ENCODE measurements at regions of chr17 and their contacts with region 1.

Region 1: DNA sequence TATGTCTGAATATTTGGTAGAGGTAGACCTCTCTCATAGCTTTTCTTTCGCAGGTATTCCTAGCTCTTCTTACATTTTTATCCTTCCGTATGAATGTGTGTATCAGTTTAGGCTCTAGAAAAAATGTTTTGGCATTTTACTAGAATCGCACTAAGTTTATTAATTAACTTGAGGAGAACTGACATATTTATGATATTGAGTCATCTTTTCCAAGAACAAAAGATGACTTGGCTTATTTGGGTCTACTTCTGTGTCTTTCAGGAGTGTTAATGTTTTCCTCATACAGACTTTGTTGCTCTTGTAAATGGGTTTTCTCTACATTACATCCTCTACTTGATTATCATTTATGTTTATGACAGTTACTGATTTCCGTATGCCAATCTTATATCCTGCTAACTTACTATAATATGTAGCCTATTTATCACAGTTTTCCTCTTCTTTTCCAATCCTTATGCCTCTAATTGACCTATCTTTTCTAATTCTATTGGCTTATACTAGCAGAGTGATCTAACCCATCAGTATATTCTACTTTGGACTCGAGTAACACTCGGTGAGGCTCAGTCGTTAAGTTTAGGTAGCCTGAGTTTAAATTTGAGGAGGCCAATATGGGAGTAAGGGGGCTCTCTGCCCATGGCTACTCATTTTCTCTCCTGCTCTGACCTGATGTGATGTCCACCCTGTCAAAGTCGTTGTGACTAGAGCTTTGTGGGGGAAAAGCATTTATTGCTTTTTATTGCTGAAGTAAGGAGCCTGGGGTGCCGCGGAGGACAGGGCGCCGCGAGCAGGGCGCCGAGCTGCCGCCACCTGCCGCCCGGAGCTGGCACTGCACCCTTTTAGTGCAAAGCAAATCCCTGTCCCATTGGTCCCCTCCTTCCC is 20.0 kb downstream of the ST6GALNAC1 start:
- DNase-seq: no peak
- ATAC-seq: peak; percentile 99
- H3K4me3 ChIP-seq: no peak overlapping the region
- H3K27ac ChIP-seq: no peak overlapping the region
- H3K4me1 ChIP-seq: no peaks in the 10 kb centered on the region
- H3K27me3 ChIP-seq: peaks cover 2 to 3% of the 10 kb centered on the region in 2 experiments; a peak in 3 of 4 replicates
- CTCF ChIP-seq: peak; percentile 90 to 97 (median 93); a peak in 5 of 6 replicates
- EP300 ChIP-seq: no peak
- POLR2A ChIP-seq: no peak
- RAD21 ChIP-seq: peak; percentile 81

Region 2: GRCh38 chr17:76523084-76524037 is 100.1 kb before region 1 on chr17:
- CTCF ChIA-PET with region 1: interaction called, 81 read pairs
- POLR2A ChIA-PET with region 1: no interaction called
- RAD21 ChIA-PET with region 1: interaction called, 23 read pairs
- SMC1A ChIA-PET with region 1: interaction called, 10 read pairs
- in situ Hi-C with region 1: loop called (anchors 5 kb)
- intact Hi-C with region 1: loop called (anchors 1 kb)
- DNase-seq: no peak
- ATAC-seq: peak; percentile 75
- H3K4me3 ChIP-seq: no peak overlapping the region
- H3K27ac ChIP-seq: no peak overlapping the region
- H3K4me1 ChIP-seq: peaks cover 10% of the 10 kb centered on the region
- H3K27me3 ChIP-seq: no peaks in the 10 kb centered on the region
- CTCF ChIP-seq: peak; percentile 99 to 100 (median 99); a peak in 5 of 6 replicates
- EP300 ChIP-seq: no peak
- POLR2A ChIP-seq: no peak
- RAD21 ChIP-seq: peak; percentile 89

Region 3: GRCh38 chr17:76557368-76558197 is 65.9 kb before region 1 on chr17:
- CTCF ChIA-PET with region 1: interaction called, 146 read pairs
- POLR2A ChIA-PET with region 1: interaction called, 5 read pairs
- RAD21 ChIA-PET with region 1: interaction called, 33 read pairs
- SMC1A ChIA-PET with region 1: interaction called, 87 read pairs
- in situ Hi-C with region 1: no loop called
- intact Hi-C with region 1: loop called (anchors 2 kb)
- DNase-seq: peak; percentile 82
- ATAC-seq: peak; percentile 85
- H3K4me3 ChIP-seq: peak overlapping the region; percentile 74
- H3K27ac ChIP-seq: peak overlapping the region; percentile 95
- H3K4me1 ChIP-seq: peaks cover 14% of the 10 kb centered on the region
- H3K27me3 ChIP-seq: no peaks in the 10 kb centered on the region
- CTCF ChIP-seq: peak; percentile 24 to 65 (median 64); a peak in 5 of 6 replicates
- EP300 ChIP-seq: no peak
- POLR2A ChIP-seq: peak; percentile 98
- RAD21 ChIP-seq: no peak

Region 4: GRCh38 chr17:76567634-76568432 is 55.7 kb before region 1 on chr17:
- CTCF ChIA-PET with region 1: interaction called, 14 read pairs
- POLR2A ChIA-PET with region 1: no interaction called
- RAD21 ChIA-PET with region 1: interaction called, 5 read pairs
- SMC1A ChIA-PET with region 1: interaction called, 87 read pairs
- in situ Hi-C with region 1: no loop called
- intact Hi-C with region 1: no loop called
- DNase-seq: no peak
- ATAC-seq: peak; percentile 63
- H3K4me3 ChIP-seq: no peak overlapping the region
- H3K27ac ChIP-seq: no peak overlapping the region
- H3K4me1 ChIP-seq: peaks cover 7% of the 10 kb centered on the region
- H3K27me3 ChIP-seq: no peaks in the 10 kb centered on the region
- CTCF ChIP-seq: no peak
- EP300 ChIP-seq: peak in 1 of 2 experiments; percentile 22; a peak in 1 of 4 replicates
- POLR2A ChIP-seq: peak; percentile 23; the same call in 1 of the 2 replicates
- RAD21 ChIP-seq: no peak

Region 5: GRCh38 chr17:76585091-76585817 is 38.3 kb before region 1 on chr17:
- CTCF ChIA-PET with region 1: interaction called, 13 read pairs
- POLR2A ChIA-PET with region 1: interaction called, 6 read pairs
- RAD21 ChIA-PET with region 1: interaction called, 7 read pairs
- SMC1A ChIA-PET with region 1: interaction called, 3 read pairs
- in situ Hi-C with region 1: no loop called
- intact Hi-C with region 1: no loop called
- DNase-seq: no peak
- ATAC-seq: peak; percentile 13
- H3K4me3 ChIP-seq: peak overlapping the region; percentile 63; the same call in 1 of the 2 replicates
- H3K27ac ChIP-seq: no peak overlapping the region
- H3K4me1 ChIP-seq: peaks cover 11% of the 10 kb centered on the region
- H3K27me3 ChIP-seq: peaks cover 3 to 9% of the 10 kb centered on the region in 2 experiments; a peak in 3 of 4 replicates
- CTCF ChIP-seq: no peak
- EP300 ChIP-seq: no peak
- POLR2A ChIP-seq: no peak
- RAD21 ChIP-seq: no peak

Region 6: DNA sequence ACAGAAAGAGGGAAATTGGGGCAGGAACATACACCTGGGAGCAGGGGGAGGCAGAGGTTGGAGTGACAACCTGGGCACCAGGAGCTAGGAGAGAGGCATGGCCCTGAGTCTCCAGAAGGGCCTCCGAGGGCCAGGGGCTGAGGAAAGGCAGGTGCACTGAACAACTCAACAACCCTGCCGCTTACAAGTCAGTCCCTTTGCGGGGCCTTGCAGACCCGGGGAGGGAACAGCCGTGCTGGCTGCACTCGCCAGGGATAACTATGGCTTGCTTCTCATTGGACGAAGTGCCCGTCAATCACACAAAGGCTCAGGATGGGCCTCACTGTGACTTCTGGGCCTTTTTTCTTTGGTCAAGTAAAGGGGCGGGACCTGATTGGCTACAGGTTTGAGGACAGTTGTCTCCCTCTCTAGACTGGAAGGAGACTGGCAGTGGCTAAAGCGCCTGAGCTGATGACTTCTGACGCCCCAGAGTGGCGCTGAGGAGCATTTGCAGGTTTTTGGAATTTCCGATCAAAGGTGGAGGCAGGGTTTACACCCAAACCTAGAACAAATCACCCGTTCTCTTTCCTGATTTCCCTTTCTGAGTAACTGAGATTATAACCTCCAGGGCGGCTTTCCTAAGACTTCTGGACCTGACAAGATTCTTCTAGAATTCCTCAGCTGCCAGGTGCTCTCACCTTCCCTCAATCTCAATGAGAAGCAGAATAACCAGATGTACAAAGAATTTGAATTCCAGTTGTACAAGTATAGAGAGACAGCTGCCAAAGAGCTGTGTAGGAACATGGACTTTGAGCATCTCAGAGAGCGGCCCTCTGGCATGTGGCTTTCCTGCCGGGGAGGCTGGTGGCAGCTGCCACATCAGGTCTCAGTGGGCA is 10.3 kb before region 1 on chr17:
- CTCF ChIA-PET with region 1: interaction called, 14 read pairs
- POLR2A ChIA-PET with region 1: no interaction called
- RAD21 ChIA-PET with region 1: interaction called, 5 read pairs
- SMC1A ChIA-PET with region 1: interaction called, 6 read pairs
- in situ Hi-C with region 1: no loop called
- intact Hi-C with region 1: no loop called
- DNase-seq: no peak
- ATAC-seq: peak; percentile 34; the same call in 2 of the 3 replicates
- H3K4me3 ChIP-seq: no peak overlapping the region
- H3K27ac ChIP-seq: no peak overlapping the region
- H3K4me1 ChIP-seq: no peaks in the 10 kb centered on the region
- H3K27me3 ChIP-seq: no peaks in the 10 kb centered on the region
- CTCF ChIP-seq: no peak
- EP300 ChIP-seq: no peak
- POLR2A ChIP-seq: no peak
- RAD21 ChIP-seq: no peak

Region 7: GRCh38 chr17:76714822-76715495 is 91.5 kb after region 1 on chr17:
- CTCF ChIA-PET with region 1: interaction called, 10 read pairs
- POLR2A ChIA-PET with region 1: no interaction called
- RAD21 ChIA-PET with region 1: no interaction called
- SMC1A ChIA-PET with region 1: interaction called, 3 read pairs
- in situ Hi-C with region 1: no loop called
- intact Hi-C with region 1: loop called (anchors 10 kb)
- DNase-seq: no peak
- ATAC-seq: peak; percentile 71
- H3K4me3 ChIP-seq: no peak overlapping the region
- H3K27ac ChIP-seq: no peak overlapping the region
- H3K4me1 ChIP-seq: peaks cover 8% of the 10 kb centered on the region
- H3K27me3 ChIP-seq: no peaks in the 10 kb centered on the region; a peak in 1 of 4 replicates
- CTCF ChIP-seq: peak; percentile 68 to 77 (median 69)
- EP300 ChIP-seq: no peak
- POLR2A ChIP-seq: no peak
- RAD21 ChIP-seq: peak; percentile 71

Measured in GM12878 (cell line).